ENCODE measurements at regions of chr1 and their contacts with region 1.

Region 1: GRCh38 chr1:150259758-150260669 is 2.4 kb downstream of the CA14 start:
- DNase-seq: no peak
- ATAC-seq: no peak
- H3K4me3 ChIP-seq: no peak overlapping the region
- H3K4me3 Mint-ChIP-seq: no peak overlapping the region
- H3K27ac ChIP-seq: no peak overlapping the region
- H3K27ac Mint-ChIP-seq: no peak overlapping the region
- H3K4me1 ChIP-seq: peaks cover 13% of the 10 kb centered on the region
- H3K4me1 Mint-ChIP-seq: peaks cover 12 to 13% of the 10 kb centered on the region in 2 donors
- H3K27me3 ChIP-seq: peaks cover 36% of the 10 kb centered on the region
- H3K27me3 Mint-ChIP-seq: peaks cover 32 to 34% of the 10 kb centered on the region in 2 donors
- CTCF ChIP-seq: no peak

Region 2: DNA sequence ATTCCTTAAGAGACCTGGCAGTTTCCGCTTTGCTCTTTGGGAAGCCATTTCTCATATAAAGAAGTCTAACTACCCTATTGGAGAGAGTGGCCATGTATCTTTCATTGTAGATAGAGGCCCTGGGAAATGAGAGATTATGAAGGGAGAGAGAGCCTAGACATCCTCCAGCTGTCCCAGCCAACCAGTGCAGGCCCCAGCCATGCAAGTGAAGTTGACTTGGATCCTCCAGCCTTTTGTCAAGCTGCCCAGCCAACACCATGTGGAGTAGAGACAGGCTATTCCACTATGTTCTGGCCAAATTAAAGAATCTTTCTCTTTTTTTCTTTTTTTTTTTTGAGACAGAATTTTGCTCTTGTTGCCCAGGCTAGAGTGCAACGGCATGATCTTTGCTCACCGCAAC is 17.0 kb before region 1 on chr1:
- intact Hi-C with region 1: no loop called
- DNase-seq: no peak
- ATAC-seq: no peak
- H3K4me3 ChIP-seq: no peak overlapping the region
- H3K4me3 Mint-ChIP-seq: no peak overlapping the region
- H3K27ac ChIP-seq: no peak overlapping the region
- H3K27ac Mint-ChIP-seq: no peak overlapping the region
- H3K4me1 ChIP-seq: no peaks in the 10 kb centered on the region
- H3K4me1 Mint-ChIP-seq: no peaks in the 10 kb centered on the region
- H3K27me3 ChIP-seq: no peaks in the 10 kb centered on the region
- H3K27me3 Mint-ChIP-seq: no peaks in the 10 kb centered on the region
- CTCF ChIP-seq: no peak

Region 3: DNA sequence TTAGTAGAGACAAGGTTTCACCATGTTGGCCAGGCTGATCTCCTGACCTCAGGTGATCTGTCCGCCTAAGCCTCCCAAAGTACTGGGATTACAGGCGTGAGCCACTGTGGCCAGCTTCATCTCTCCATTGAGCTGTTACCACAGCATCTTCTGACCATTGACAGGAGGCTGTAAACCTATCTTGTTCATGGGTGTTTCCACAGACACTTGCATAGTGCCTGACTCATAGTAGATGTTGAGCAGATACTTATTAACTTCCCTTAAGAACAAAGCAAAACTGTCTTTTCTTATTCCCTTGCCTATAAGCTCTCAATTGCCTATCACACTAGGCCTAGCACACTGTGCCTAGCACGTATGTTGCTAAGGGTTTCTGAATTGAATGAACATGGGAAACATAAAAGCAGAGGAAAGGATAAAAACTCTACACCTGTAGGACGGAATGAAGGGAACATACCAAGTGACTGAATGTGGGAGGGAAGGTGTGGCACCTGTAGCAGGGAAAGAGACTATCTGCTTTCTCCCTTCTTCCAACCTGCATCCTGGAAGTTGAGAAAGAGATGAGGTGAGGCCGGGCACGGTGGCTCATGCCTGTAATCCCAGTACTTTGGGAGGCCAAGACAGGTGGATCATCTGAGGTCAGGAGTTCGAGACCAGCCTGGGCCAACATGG is 11.4 kb after region 1 on chr1:
- intact Hi-C with region 1: no loop called
- DNase-seq: no peak
- ATAC-seq: no peak
- H3K4me3 ChIP-seq: no peak overlapping the region
- H3K4me3 Mint-ChIP-seq: no peak overlapping the region
- H3K27ac ChIP-seq: no peak overlapping the region
- H3K27ac Mint-ChIP-seq: no peak overlapping the region
- H3K4me1 ChIP-seq: peaks cover 26% of the 10 kb centered on the region
- H3K4me1 Mint-ChIP-seq: peaks cover 21 to 31% of the 10 kb centered on the region in 2 donors
- H3K27me3 ChIP-seq: no peaks in the 10 kb centered on the region
- H3K27me3 Mint-ChIP-seq: peaks cover 12 to 17% of the 10 kb centered on the region in 2 donors
- CTCF ChIP-seq: no peak

Region 4: GRCh38 chr1:150281837-150282653 is 22.0 kb after region 1 on chr1 and contains the start of gene CIART:
- intact Hi-C with region 1: loop called (anchors 1 kb)
- DNase-seq: peak; percentile 55 to 91
- ATAC-seq: peak; percentile 84 to 92 (median 90)
- H3K4me3 ChIP-seq: peak within 1 kb of the TSS; percentile 46
- H3K4me3 Mint-ChIP-seq: peak within 1 kb of the TSS; percentile 91
- H3K27ac ChIP-seq: no peak within 1 kb of the TSS
- H3K27ac Mint-ChIP-seq: peak within 1 kb of the TSS; percentile 59 to 83
- H3K4me1 ChIP-seq: peaks cover 22% of the 10 kb centered on the region
- H3K4me1 Mint-ChIP-seq: peaks cover 18 to 23% of the 10 kb centered on the region in 2 donors
- H3K27me3 ChIP-seq: no peaks in the 10 kb centered on the region
- H3K27me3 Mint-ChIP-seq: peaks cover 8 to 26% of the 10 kb centered on the region in 2 donors
- CTCF ChIP-seq: no peak
- total RNA-seq, gene CIART: 0.33 to 2.4 (median 1.9) TPM

Region 5: DNA sequence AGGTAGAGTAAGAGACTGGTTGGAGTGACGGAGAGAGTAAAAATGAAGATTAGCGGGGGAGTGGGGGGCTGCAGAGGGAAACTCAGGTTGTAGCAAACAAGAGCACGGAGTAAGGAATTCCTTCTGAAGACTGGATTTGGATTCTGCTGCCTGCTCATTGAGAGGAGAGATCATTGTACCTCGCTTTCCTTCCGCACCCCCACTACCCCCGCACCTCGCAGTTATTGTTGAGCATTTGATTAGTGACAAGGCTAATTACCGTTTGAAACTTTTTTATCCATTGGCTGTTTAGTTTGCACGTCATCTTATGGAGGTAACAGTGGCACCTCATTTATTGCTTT is 61.8 kb after region 1 on chr1:
- intact Hi-C with region 1: loop called (anchors 5 kb)
- DNase-seq: peak in 1 of 2 donors; percentile 40
- ATAC-seq: peak in 1 of 3 donors; percentile 12
- H3K4me3 ChIP-seq: peak overlapping the region; percentile 85
- H3K4me3 Mint-ChIP-seq: peak overlapping the region; percentile 100
- H3K27ac ChIP-seq: peak overlapping the region; percentile 89
- H3K27ac Mint-ChIP-seq: peak overlapping the region; percentile 99 to 100
- H3K4me1 ChIP-seq: peaks cover 12% of the 10 kb centered on the region
- H3K4me1 Mint-ChIP-seq: peaks cover 22 to 29% of the 10 kb centered on the region in 2 donors
- H3K27me3 ChIP-seq: no peaks in the 10 kb centered on the region
- H3K27me3 Mint-ChIP-seq: peaks cover 0 to 3% of the 10 kb centered on the region in 2 donors
- CTCF ChIP-seq: no peak

Region 6: DNA sequence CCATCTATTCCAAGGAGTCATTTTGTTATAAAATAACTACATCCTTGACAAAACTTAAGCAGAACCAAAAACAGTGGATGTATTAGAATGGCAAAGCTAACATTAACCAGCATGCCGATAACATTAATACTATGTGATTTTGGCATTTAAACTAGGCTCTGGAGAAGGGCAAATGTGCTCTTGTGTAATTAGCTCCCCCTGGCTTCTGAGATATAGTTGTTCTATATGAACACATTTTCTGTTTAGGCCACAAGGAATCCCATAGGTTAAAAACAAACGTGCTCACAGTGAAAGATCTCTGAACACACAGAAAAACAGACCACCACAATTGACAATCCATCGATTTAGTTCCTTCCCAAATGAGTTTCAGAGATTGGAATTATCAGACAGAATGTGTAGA is 169.8 kb after region 1 on chr1:
- intact Hi-C with region 1: loop called (anchors 1 kb)
- DNase-seq: peak in 1 of 2 donors; percentile 43
- ATAC-seq: peak in 2 of 3 donors; percentile 34 to 49
- H3K4me3 ChIP-seq: no peak overlapping the region
- H3K4me3 Mint-ChIP-seq: no peak overlapping the region
- H3K27ac ChIP-seq: no peak overlapping the region
- H3K27ac Mint-ChIP-seq: peak overlapping the region; percentile 4 to 7
- H3K4me1 ChIP-seq: no peaks in the 10 kb centered on the region
- H3K4me1 Mint-ChIP-seq: peaks cover 14 to 22% of the 10 kb centered on the region in 2 donors
- H3K27me3 ChIP-seq: no peaks in the 10 kb centered on the region
- H3K27me3 Mint-ChIP-seq: no peaks in the 10 kb centered on the region
- CTCF ChIP-seq: no peak

Region 7: DNA sequence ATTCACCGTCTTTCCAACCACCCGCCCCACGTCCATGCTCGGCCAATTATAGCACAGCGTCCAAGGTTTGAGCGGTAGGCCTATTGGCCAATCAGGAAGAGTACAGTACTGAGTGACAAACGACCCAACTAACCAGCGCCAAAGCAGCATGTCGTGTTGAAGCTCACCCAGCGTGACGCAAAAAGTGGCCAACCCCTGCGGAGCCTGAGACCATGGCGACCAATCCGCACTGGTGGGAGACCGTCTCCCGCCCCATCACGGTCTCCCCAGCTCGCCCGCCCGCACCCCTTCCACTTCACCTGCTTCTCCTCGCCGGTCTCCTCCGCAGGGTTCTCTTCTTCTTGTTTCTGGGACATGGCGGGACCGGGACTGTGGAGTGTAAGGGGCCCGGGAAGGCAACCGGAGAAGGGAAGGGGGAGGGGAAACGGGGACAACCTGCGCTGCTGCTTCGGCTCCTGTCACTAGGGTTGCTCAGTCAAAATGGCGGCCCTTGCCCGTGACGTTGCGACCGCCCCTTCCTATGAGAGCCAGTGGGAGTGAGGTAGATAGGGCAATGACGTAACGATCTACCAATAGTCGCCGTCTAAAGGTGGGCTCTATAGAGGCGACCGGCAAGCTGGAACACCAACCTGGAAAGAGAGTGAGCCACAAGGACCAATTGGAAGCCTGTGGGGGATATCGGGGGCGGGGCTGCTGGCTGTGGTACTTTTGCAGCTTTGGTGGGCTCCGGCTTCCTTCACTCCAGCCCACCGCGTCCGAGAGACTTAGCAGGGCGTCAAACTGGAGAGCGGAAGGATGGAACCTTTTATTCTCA is 369.3 kb after region 1 on chr1 and contains the start of gene ENSA:
- intact Hi-C with region 1: loop called (anchors 10 kb)
- DNase-seq: peak; percentile 94 to 99
- ATAC-seq: peak; percentile 82 to 95 (median 84)
- H3K4me3 ChIP-seq: peak within 1 kb of the TSS; percentile 62
- H3K4me3 Mint-ChIP-seq: no peak within 1 kb of the TSS
- H3K27ac ChIP-seq: peak within 1 kb of the TSS; percentile 99
- H3K27ac Mint-ChIP-seq: no peak within 1 kb of the TSS
- H3K4me1 ChIP-seq: peaks cover 18% of the 10 kb centered on the region
- H3K4me1 Mint-ChIP-seq: peaks cover 6 to 9% of the 10 kb centered on the region in 2 donors
- H3K27me3 ChIP-seq: no peaks in the 10 kb centered on the region
- H3K27me3 Mint-ChIP-seq: no peaks in the 10 kb centered on the region
- CTCF ChIP-seq: no peak
- total RNA-seq, gene ENSA: 185 to 228 (median 220) TPM

Region 8: GRCh38 chr1:150995896-150996295 is 735.9 kb after region 1 on chr1:
- intact Hi-C with region 1: loop called (anchors 5 kb)
- DNase-seq: peak; percentile 28 to 70
- ATAC-seq: peak; percentile 73 to 79 (median 74)
- H3K4me3 ChIP-seq: no peak overlapping the region
- H3K4me3 Mint-ChIP-seq: no peak overlapping the region
- H3K27ac ChIP-seq: no peak overlapping the region
- H3K27ac Mint-ChIP-seq: peak overlapping the region in 1 of 2 donors; percentile 36
- H3K4me1 ChIP-seq: peaks cover 4% of the 10 kb centered on the region
- H3K4me1 Mint-ChIP-seq: peaks cover 5 to 6% of the 10 kb centered on the region in 2 donors
- H3K27me3 ChIP-seq: no peaks in the 10 kb centered on the region
- H3K27me3 Mint-ChIP-seq: no peaks in the 10 kb centered on the region
- CTCF ChIP-seq: peak; percentile 80